GM23248 (cell line): ENCODE measurements at regions of chr17 and their contacts with region 1.

Region 1: DNA sequence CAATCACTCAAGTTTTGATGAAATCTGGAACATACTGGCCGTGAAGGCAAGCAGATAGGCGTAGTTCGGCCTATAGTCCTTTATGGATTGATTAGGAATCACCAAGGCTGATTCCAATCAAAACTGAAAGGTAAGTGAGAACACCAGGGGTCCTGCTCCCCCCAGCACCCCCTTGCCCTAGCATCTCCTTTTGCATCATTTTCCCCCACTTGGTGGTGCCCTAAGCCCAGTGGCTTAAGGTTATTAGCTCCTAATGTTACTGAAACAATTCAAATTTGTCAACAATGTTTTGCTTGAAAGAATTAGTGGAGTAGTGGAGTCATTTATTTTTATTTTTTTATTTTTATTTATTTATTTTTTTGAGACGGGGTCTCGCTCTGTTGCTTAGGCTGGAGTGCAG is 4.9 kb downstream of the SLFN14 start:
- DNase-seq: no peak
- H3K4me3 ChIP-seq: no peak overlapping the region
- H3K27ac ChIP-seq: no peak overlapping the region
- H3K4me1 ChIP-seq: no peaks in the 10 kb centered on the region
- H3K27me3 ChIP-seq: peaks cover 30% of the 10 kb centered on the region; the same call in 1 of the 2 replicates

Region 2: GRCh38 chr17:35368081-35368830 is 187.4 kb before region 1 on chr17:
- in situ Hi-C with region 1: no loop called
- DNase-seq: no peak
- H3K4me3 ChIP-seq: no peak overlapping the region
- H3K27ac ChIP-seq: no peak overlapping the region
- H3K4me1 ChIP-seq: peaks cover 15% of the 10 kb centered on the region
- H3K27me3 ChIP-seq: no peaks in the 10 kb centered on the region

Region 3: GRCh38 chr17:35612924-35613521 is 57.3 kb after region 1 on chr17:
- in situ Hi-C with region 1: loop called (anchors 10 kb)
- DNase-seq: peak; percentile 64
- H3K4me3 ChIP-seq: no peak overlapping the region
- H3K27ac ChIP-seq: no peak overlapping the region
- H3K4me1 ChIP-seq: no peaks in the 10 kb centered on the region
- H3K27me3 ChIP-seq: no peaks in the 10 kb centered on the region